Activated naive CD4-positive, alpha-beta T cell treated with anti-CD3 and anti-CD28 coated beads for 36 hours (primary cell): ENCODE measurements at regions of chr2 and their contacts with region 1.

Region 1: DNA sequence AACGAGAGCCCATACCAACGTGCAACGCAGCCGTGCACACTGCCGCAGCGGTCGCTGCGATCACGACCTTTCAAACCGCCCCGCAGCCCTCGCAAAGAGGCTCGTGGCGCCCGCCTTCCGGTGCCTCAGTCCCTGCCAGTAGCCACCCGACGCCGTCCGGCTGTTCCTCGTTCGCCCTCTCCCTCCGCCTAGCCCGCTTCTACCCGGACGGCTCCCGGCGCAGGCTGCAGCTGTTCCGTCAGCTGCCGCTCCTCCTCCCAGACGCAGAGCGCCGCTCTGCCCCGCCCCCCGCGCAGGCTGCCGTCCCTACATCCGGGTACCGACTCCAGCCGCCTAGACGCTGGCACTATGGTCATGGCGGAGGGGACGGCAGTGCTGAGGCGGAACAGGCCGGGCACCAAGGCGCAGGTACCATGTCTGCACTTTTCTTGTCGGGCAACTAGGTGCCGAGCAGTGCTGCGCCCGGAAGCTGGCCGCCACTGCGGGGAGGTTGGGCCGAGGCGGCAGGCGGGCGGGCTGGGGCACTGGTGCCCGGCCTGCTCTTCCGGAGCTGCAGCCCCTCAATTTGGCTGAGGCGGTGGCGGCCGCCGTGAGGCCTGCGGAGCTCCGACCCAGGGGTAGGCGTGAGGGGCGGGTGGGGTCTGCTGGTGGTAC is at the start of gene MOB4:
- DNase-seq: peak; percentile 93
- H3K4me3 Mint-ChIP-seq: peak within 1 kb of the TSS; percentile 98
- H3K27ac Mint-ChIP-seq: peak within 1 kb of the TSS; percentile 89
- H3K4me1 Mint-ChIP-seq: peaks cover 37% of the 10 kb centered on the region
- H3K27me3 Mint-ChIP-seq: no peaks in the 10 kb centered on the region
- total RNA-seq, gene MOB4: 10.7 to 14.1 TPM

Region 2: DNA sequence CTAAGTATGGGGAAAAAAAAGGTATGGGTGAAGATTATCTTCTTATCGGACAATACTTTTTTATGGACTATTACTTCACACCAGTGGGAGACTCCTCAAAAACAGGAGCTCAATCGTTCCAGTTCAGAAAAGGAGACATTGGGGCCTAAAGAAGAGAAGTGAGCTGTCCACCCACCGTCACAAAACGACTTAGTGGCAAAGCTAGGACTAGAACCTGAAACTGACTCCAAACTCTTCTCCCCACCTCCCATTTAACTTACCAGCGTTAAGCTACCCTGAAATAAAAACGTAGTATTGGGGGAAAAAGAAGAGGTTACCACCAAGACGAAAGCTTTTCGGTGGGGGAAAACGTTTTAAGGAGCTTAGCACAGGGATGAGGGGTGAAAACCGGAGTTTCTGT is 716.9 kb before region 1 on chr2:
- CTCF ChIA-PET with region 1: no interaction called
- intact Hi-C with region 1: loop called (anchors 10 kb)
- DNase-seq: no peak
- H3K4me3 Mint-ChIP-seq: peak overlapping the region; percentile 91
- H3K27ac Mint-ChIP-seq: peak overlapping the region; percentile 90
- H3K4me1 Mint-ChIP-seq: peaks cover 44% of the 10 kb centered on the region
- H3K27me3 Mint-ChIP-seq: peaks cover 3% of the 10 kb centered on the region